PC-3 (cell line): ENCODE measurements at regions of chr1 and their contacts with region 1.

Region 1: DNA sequence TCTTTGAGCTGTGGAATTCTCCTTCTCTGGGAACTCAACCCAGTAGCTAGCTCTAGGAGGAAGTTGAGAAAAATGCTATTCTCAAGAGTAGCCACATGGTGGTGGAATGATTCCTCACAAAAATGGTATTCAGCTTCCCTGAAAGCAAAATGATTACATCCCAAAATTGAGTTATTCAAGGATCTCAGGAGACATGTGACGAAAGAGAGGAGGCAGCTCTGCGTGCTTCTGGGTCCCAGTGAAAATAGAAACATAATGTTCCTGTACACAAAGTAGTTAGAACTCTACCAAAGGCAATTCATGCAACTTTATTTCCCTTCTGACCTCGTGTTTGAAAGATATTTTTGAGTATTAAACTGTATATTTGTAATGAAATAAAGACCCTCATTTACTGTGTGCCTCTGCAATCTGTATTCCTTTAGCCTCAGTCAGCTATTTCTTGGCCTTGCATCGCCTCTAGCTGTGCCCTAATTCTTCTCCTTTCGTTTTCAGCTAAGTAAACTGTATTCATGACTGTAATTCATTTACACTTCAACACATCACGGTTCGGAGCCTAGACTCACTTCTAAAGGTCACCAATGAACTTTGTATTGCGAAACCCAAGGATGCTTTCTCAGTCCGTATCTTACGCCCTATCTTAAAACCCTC is 167.3 kb downstream of the FASLG start:
- DNase-seq: peak; percentile 99
- ATAC-seq: peak; percentile 86
- H3K4me3 ChIP-seq: no peak overlapping the region
- H3K27ac ChIP-seq: no peak overlapping the region
- H3K4me1 ChIP-seq: peaks cover 11% of the 10 kb centered on the region
- H3K27me3 ChIP-seq: no peaks in the 10 kb centered on the region
- CTCF ChIP-seq: peak; percentile 100

Region 2: DNA sequence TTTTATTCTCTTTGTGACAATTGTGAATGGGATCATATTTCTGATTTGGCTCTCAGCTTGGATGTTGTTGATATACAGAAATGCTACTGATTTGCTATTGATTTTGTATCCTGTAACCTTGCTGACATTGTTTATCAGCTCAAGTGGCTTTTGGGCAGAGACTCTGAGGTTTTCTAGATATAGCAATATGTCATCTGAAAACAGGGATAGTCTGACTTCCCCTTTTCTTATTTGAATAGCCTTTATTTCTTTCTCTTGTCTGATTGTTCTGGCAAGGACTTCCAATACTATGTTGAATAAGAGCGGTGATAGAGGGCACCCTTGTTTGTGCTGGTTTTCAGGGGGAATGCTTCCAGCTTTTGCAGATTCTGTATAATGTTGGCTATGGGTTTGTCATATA is 16.5 kb before region 1 on chr1:
- CTCF ChIA-PET with region 1: no interaction called
- POLR2A ChIA-PET with region 1: no interaction called
- intact Hi-C with region 1: no loop called
- DNase-seq: no peak
- ATAC-seq: no peak
- H3K4me3 ChIP-seq: no peak overlapping the region
- H3K27ac ChIP-seq: no peak overlapping the region
- H3K4me1 ChIP-seq: no peaks in the 10 kb centered on the region
- H3K27me3 ChIP-seq: no peaks in the 10 kb centered on the region
- CTCF ChIP-seq: no peak

Region 3: DNA sequence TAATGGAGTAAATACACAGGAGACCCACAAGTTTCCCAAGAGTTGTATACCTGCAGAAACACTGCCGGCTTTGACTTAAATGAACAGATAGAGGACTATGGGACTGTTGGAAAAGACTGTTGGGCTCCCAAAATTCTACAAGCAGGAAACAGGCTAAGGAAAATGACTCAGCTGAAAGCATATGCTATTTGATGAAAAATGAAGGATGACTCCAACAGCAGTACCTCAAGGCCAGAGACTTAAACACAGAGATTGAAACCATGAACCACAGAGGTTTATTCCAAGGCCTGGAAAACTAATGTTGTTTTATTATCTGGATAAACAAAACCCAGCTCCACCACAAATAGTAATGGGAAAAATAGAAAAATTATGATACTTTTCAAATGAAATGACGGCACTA is 36.8 kb after region 1 on chr1:
- CTCF ChIA-PET with region 1: interaction called, 5 read pairs
- POLR2A ChIA-PET with region 1: no interaction called
- intact Hi-C with region 1: loop called (anchors 1 kb)
- DNase-seq: peak; percentile 30
- ATAC-seq: no peak
- H3K4me3 ChIP-seq: no peak overlapping the region
- H3K27ac ChIP-seq: no peak overlapping the region
- H3K4me1 ChIP-seq: peaks cover 9% of the 10 kb centered on the region
- H3K27me3 ChIP-seq: no peaks in the 10 kb centered on the region
- CTCF ChIP-seq: no peak

Region 4: GRCh38 chr1:172935062-172935592 is 108.9 kb after region 1 on chr1:
- CTCF ChIA-PET with region 1: no interaction called
- POLR2A ChIA-PET with region 1: no interaction called
- intact Hi-C with region 1: loop called (anchors 1 kb)
- DNase-seq: no peak
- ATAC-seq: no peak
- H3K4me3 ChIP-seq: no peak overlapping the region
- H3K27ac ChIP-seq: peak overlapping the region; percentile 70
- H3K4me1 ChIP-seq: peaks cover 34% of the 10 kb centered on the region
- H3K27me3 ChIP-seq: no peaks in the 10 kb centered on the region
- CTCF ChIP-seq: no peak

Region 5: GRCh38 chr1:173043253-173043652 is 217.0 kb after region 1 on chr1:
- CTCF ChIA-PET with region 1: interaction called, 3 read pairs
- POLR2A ChIA-PET with region 1: no interaction called
- intact Hi-C with region 1: loop called (anchors 5 kb)
- DNase-seq: peak; percentile 99
- ATAC-seq: peak; percentile 99
- H3K4me3 ChIP-seq: peak overlapping the region; percentile 1; the same call in 1 of the 2 replicates
- H3K27ac ChIP-seq: peak overlapping the region; percentile 33
- H3K4me1 ChIP-seq: peaks cover 27% of the 10 kb centered on the region
- H3K27me3 ChIP-seq: no peaks in the 10 kb centered on the region
- CTCF ChIP-seq: no peak

Region 6: DNA sequence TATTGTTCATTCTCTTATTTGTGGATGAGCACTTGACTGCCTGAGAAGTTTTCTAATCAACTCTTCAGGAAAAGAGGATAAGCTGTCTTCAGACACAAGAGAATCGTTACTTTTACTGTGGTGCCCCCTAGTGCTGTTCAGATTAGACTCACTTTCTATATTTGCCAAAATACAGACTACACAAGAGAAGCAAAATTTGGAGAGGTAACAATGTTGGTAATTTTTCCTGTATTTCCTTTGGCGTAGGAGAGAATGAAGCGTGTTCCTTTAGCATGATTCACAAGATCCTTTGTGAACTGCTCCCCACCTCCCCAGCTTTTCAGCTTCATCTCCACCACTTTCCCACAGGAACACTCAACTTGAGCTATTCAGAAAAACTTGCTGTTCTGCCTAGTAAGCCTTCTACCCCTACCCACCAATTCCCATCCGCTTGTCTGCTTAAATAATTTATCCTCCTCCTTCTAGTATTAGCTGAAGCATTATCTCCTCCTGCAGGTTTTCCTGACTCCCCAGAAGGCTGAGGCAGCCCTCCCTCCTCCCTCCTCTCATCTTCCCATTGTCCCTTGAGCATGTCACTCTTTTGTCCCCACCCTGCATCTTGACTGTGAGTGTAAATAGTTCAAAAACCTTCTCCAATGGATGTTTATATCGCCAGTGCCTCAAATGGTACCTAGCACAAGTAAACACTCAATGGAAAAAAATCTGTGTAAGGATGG is 376.4 kb after region 1 on chr1:
- CTCF ChIA-PET with region 1: interaction called, 126 read pairs
- POLR2A ChIA-PET with region 1: interaction called, 7 read pairs
- intact Hi-C with region 1: loop called (anchors 1 kb)
- DNase-seq: peak; percentile 98
- ATAC-seq: peak; percentile 93
- H3K4me3 ChIP-seq: no peak overlapping the region
- H3K27ac ChIP-seq: no peak overlapping the region
- H3K4me1 ChIP-seq: 0 out of 2 replicates have a peak, but pooled peaks cover 4% of the 10 kb centered on the region
- H3K27me3 ChIP-seq: no peaks in the 10 kb centered on the region
- CTCF ChIP-seq: peak; percentile 100

Region 7: DNA sequence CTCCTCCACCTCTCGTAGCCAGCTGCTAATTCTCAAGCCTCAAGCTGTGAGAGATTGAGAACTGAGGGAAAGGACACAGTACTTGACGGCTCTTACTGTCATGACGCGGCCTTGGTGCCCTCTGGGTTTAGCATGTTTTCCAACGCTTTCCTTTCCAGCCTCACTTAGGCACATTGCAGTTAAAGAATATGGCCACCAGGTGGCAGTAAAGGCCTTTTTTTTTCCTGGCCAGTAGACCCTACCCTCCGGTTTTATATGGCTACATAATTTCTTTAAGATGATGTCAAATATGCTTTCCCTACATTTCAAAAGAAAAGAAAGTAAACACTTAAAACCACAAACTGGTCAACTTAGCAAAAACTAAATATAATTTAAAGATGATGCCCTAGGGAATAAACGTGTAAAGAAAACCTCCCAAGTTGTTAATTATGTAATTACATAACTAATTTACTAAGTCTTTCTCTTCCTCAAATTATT is 594.1 kb after region 1 on chr1:
- CTCF ChIA-PET with region 1: interaction called, 4 read pairs
- POLR2A ChIA-PET with region 1: interaction called, 3 read pairs
- intact Hi-C with region 1: loop called (anchors 1 kb)
- DNase-seq: peak; percentile 100
- ATAC-seq: peak; percentile 50
- H3K4me3 ChIP-seq: peak overlapping the region; percentile 35
- H3K27ac ChIP-seq: 0 out of 2 replicates have a peak overlapping the region, but pooled peaks have one; percentile 1
- H3K4me1 ChIP-seq: peaks cover 42% of the 10 kb centered on the region
- H3K27me3 ChIP-seq: no peaks in the 10 kb centered on the region
- CTCF ChIP-seq: peak; percentile 100